Heart left ventricle (tissue), 16 donors: ENCODE measurements at regions of chr7 and their contacts with region 1.

Region 1: DNA sequence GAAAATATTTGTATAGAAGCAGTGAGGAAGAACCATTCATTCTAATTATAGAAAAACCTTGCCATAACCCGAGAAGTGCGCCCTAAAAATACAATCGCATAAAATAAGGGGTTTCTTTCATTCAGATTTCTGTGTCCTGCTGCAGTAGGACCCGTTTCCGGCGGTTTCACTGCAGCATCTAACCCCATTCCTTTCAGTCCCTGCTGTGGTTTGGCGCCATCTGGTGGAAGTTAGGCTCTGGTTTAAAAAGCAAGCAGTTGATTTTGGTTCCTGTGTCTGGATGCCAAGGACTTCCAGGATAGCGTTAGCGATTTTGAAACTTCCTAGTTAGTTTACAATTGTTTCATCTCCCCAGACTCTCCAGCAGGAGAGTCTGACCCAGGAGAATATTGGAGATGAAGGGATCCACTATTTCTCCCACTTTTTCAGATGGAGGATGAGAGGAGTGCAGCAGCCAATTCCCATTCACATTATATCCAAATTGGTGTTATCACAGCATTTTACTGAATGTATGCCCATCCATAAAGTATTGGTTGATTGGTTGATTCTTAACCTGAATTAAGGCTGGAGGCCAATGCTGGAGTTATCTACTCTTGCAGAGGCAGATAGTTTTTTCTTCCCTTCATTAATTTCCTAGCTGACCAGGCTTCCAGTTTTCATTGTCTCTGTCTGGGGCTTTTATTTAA is 128.8 kb upstream of the CACNA2D1 start:
- DNase-seq: peak; percentile 79 to 87 (median 82)
- ATAC-seq: peak; percentile 83 to 94 (median 86)
- H3K4me3 ChIP-seq: peak overlapping the region in 2 of 12 donors; percentile 3 to 5
- H3K27ac ChIP-seq: no peak overlapping the region
- H3K4me1 ChIP-seq: peaks cover 0 to 9% (median 0%) of the 10 kb centered on the region in 12 donors
- H3K27me3 ChIP-seq: no peaks in the 10 kb centered on the region
- CTCF ChIP-seq: peak; percentile 78 to 97 (median 91)
- POLR2A ChIP-seq: no peak

Region 2: GRCh38 chr7:81499262-81500116 is 1072.8 kb before region 1 on chr7:
- intact Hi-C with region 1: loop called in 3 of 10 experiments (anchors 10 kb)
- DNase-seq: peak in 1 of 5 donors; percentile 22
- ATAC-seq: peak; percentile 64 to 92 (median 76)
- H3K4me3 ChIP-seq: no peak overlapping the region
- H3K27ac ChIP-seq: peak overlapping the region in 7 of 12 donors; percentile 4 to 66 (median 38)
- H3K4me1 ChIP-seq: peaks cover 0 to 26% (median 8%) of the 10 kb centered on the region in 12 donors
- H3K27me3 ChIP-seq: no peaks in the 10 kb centered on the region
- CTCF ChIP-seq: peak; percentile 15 to 75 (median 59)
- POLR2A ChIP-seq: no peak

Region 3: DNA sequence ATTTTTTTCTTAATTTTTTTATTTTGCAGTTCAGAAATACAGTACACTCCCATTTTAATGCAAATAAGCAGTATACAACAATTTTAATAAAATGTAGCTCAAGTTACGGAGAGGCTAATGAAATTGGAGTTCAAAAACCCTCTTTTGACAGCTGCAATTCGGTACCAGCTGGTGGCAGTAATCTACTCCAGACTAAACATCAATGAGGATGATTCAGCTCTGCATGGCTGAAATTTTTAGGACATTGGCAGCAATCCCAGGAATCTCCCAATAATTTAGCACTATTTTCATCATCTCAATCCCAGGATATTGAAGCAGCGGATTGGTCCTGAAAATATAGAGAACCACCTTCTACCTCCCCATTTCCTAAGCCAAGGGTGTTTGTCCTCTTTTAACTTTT is 407.5 kb before region 1 on chr7:
- intact Hi-C with region 1: loop called in 6 of 10 experiments (anchors 5 to 10 kb)
- DNase-seq: peak in 4 of 5 donors; percentile 15 to 35 (median 26)
- ATAC-seq: peak; percentile 45 to 86 (median 68)
- H3K4me3 ChIP-seq: no peak overlapping the region
- H3K27ac ChIP-seq: no peak overlapping the region
- H3K4me1 ChIP-seq: peaks cover 0 to 16% (median 7%) of the 10 kb centered on the region in 12 donors
- H3K27me3 ChIP-seq: no peaks in the 10 kb centered on the region
- CTCF ChIP-seq: peak in 10 of 12 donors; percentile 3 to 55 (median 34)
- POLR2A ChIP-seq: no peak

Region 4: DNA sequence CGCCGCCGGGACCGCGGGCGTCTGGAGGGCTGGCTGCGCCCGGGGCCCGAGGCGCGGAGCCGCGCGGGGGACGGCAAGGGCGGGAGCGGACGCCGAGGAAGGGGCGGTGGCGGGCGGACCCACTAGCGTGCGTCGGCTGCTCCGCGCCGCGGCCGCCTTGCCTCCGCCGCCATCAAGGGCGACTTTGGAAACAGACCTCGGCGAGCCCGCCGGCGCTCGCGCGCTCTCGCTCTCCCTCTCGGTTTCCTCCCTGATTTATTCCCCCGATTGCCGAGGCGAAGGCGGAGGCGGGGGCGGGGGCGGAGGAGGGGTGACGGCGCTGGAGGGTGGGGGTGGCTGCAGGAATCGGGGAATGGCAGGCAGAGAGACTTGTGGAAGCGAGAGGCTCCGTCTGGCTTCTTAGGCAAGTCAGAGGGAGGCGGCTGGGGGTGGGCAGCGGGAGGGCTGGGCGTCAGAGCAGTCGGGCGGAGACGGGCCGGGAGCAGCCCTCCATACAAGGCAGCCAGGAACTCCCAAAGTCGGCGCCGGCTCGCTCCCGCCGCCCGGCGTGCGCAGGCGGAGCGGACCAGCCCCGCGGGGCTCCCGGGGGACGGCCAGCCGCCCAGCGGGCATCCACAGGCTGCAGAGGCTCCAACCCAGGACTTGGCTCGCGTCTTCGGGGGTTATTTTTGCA is 128.7 kb before region 1 on chr7 and contains the start of gene CACNA2D1:
- intact Hi-C with region 1: loop called in 5 of 10 experiments (anchors 5 to 10 kb)
- DNase-seq: peak; percentile 89 to 92 (median 90)
- ATAC-seq: peak; percentile 92 to 97 (median 96)
- H3K4me3 ChIP-seq: peak within 1 kb of the TSS; percentile 57 to 88 (median 77)
- H3K27ac ChIP-seq: peak within 1 kb of the TSS; percentile 85 to 96 (median 92)
- H3K4me1 ChIP-seq: peaks cover 0 to 32% (median 10%) of the 10 kb centered on the region in 12 donors
- H3K27me3 ChIP-seq: peaks cover 0 to 36% (median 0%) of the 10 kb centered on the region in 9 donors
- CTCF ChIP-seq: peak in 10 of 12 donors; percentile 14 to 62 (median 38)
- POLR2A ChIP-seq: peak in 1 of 2 donors; percentile 23
- total RNA-seq, gene CACNA2D1: 39.1 to 122 (median 60.9) TPM